H1 (cell line): ENCODE measurements at regions of chr15 and their contacts with region 1.

Region 1: DNA sequence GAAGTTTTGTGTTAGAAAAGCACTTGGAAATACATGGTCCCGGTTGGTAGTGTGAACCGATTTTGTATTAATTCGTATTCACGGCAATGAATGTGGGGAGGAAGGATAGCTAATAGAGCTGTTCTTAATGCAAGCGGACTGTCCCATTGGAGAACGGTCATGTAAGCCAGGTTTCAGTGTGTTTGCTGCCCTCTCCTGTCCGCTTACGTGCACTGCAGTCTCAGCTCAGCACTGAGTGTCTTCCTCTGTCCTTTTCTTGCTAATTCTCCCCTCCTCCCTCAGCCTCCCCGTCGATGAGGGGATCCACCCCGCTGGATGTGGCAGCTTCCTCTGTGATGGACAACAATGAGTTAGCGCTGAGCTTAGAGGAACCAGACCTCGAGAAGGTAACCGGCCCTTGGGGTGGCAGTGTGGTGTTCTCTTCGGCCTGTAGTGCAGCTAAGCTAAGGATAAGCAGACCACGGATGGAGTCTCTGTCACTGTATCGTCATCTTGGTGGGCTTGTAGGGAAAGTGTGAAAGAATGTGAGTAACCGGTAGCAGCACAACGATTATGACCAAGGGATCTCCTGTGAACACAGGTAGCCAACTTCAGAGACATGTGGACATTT is 267.5 kb upstream of the CHRM5 start:
- DNase-seq: peak; percentile 65 to 89
- H3K4me3 ChIP-seq: no peak overlapping the region
- H3K27ac ChIP-seq: no peak overlapping the region
- H3K4me1 ChIP-seq: peaks cover 0 to 4% (median 0%) of the 10 kb centered on the region in 4 experiments; a peak in 4 of 7 replicates
- H3K27me3 ChIP-seq: no peaks in the 10 kb centered on the region
- CTCF ChIP-seq: peak; percentile 86 to 100 (median 98)
- EP300 ChIP-seq: no peak
- POLR2A ChIP-seq: no peak
- RAD21 ChIP-seq: peak; percentile 94 to 98

Region 2: GRCh38 chr15:32870240-32871033 is 830.4 kb before region 1 on chr15:
- CTCF ChIA-PET with region 1: no interaction called
- POLR2A ChIA-PET with region 1: no interaction called
- DNase-seq: no peak
- H3K4me3 ChIP-seq: no peak overlapping the region
- H3K27ac ChIP-seq: no peak overlapping the region
- H3K4me1 ChIP-seq: peaks cover 0 to 5% (median 0%) of the 10 kb centered on the region in 4 experiments; a peak in 2 of 7 replicates
- H3K27me3 ChIP-seq: no peaks in the 10 kb centered on the region
- CTCF ChIP-seq: no peak
- EP300 ChIP-seq: no peak
- POLR2A ChIP-seq: no peak
- RAD21 ChIP-seq: no peak

Region 3: DNA sequence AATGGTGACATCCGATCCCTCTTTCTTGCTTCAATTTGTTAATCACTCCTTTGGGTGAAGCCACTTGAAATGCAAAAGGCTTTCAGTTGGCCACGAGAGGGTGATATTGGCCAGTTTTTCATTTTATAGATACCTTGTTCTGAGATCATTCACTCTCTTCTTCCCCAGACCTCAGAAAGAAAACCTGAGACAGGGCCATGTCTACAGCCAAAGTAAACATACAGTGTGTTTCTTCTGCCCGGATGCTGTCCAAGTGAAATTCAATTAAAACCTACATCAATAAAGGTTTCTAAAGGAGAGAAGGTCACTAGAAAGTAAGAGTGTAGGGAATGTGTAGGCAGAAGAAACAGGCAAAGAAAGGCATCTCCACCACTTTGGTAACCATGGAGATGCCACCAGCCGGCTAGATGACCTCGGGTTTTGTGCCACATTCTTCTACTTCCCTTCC is 466.8 kb before region 1 on chr15:
- CTCF ChIA-PET with region 1: interaction called, 17 read pairs
- POLR2A ChIA-PET with region 1: no interaction called
- DNase-seq: no peak
- H3K4me3 ChIP-seq: no peak overlapping the region
- H3K27ac ChIP-seq: no peak overlapping the region
- H3K4me1 ChIP-seq: peaks cover 0 to 2% (median 0%) of the 10 kb centered on the region in 4 experiments; a peak in 1 of 7 replicates
- H3K27me3 ChIP-seq: no peaks in the 10 kb centered on the region
- CTCF ChIP-seq: peak in 2 of 3 experiments; percentile 41 to 56; a peak in 2 of 4 replicates
- EP300 ChIP-seq: no peak
- POLR2A ChIP-seq: no peak
- RAD21 ChIP-seq: peak; percentile 71 to 76

Region 4: DNA sequence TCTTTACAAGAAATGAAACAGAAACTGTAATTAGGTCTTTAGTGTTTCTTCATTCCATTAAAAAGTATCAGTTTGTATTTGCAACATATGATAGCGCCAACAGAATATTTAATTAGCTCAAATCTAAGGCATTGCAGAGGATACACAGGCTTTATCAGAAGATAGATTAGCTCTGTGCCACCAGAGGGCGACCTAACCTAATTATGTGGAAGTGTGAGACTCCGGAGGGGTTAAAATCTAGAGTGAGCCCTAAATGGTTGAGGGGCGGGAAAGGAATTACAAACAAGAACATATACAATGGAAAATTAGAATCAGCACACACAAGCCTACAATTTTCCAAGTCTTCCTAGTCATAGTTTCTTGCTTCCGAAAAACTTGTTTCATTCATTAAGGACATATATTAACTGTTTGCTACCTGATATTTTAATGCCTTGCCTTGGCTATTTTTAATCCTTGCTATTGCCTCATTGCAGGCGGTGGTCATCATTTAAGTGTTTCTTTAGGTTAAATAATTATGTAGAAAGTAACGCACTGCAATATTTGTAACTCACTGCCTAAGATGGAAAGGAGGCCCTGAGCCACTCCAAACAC is 408.0 kb before region 1 on chr15:
- CTCF ChIA-PET with region 1: interaction called, 81 read pairs
- POLR2A ChIA-PET with region 1: interaction called, 3 read pairs
- DNase-seq: peak in 1 of 2 experiments; percentile 70
- H3K4me3 ChIP-seq: no peak overlapping the region
- H3K27ac ChIP-seq: no peak overlapping the region
- H3K4me1 ChIP-seq: no peaks in the 10 kb centered on the region
- H3K27me3 ChIP-seq: no peaks in the 10 kb centered on the region
- CTCF ChIP-seq: peak in 2 of 3 experiments; percentile 68 to 76; a peak in 3 of 4 replicates
- EP300 ChIP-seq: no peak
- POLR2A ChIP-seq: no peak
- RAD21 ChIP-seq: peak; percentile 93 to 95

Region 5: DNA sequence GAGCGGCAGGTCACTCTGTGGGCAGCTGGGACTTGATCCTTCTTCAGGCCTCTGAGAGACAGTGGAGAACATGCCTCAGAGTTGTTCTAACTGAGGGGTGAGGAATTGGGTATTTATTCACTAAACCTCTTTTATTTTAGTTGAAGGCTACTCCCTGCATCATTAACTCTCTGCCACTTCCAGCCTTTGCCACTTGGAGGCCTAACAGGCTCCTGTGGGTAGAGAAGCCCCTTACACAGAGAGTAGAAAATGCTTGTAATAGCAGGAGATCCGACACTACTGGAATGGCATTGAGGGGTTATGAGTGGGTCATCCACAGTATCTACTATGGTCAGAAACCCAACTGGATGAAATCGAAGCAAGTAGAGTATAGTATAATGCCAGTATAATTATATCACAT is 308.3 kb before region 1 on chr15:
- CTCF ChIA-PET with region 1: interaction called, 14 read pairs
- POLR2A ChIA-PET with region 1: no interaction called
- DNase-seq: no peak
- H3K4me3 ChIP-seq: no peak overlapping the region
- H3K27ac ChIP-seq: no peak overlapping the region
- H3K4me1 ChIP-seq: no peaks in the 10 kb centered on the region; a peak in 2 of 7 replicates
- H3K27me3 ChIP-seq: no peaks in the 10 kb centered on the region
- CTCF ChIP-seq: peak; percentile 5 to 53 (median 52)
- EP300 ChIP-seq: no peak
- POLR2A ChIP-seq: no peak
- RAD21 ChIP-seq: peak; percentile 43 to 66

Region 6: DNA sequence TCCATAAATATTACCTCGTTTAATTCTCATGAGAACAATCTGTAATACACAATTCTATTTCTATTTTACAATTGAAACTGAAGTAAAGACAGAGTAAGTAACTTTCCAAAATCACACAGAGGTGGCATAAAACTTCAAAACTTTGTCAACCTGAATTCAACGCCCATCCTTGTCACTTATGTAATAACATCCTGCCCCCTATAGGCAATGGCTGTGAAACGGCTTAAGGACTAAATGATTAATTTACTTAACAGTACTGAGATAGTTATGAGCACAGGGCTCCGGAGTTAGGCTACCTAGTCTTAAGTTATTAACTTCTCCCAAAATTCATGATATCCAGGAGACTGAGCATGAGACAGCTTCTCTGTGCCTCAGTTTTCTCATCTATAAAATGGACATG is 25.6 kb before region 1 on chr15:
- CTCF ChIA-PET with region 1: interaction called, 15 read pairs
- POLR2A ChIA-PET with region 1: no interaction called
- DNase-seq: no peak
- H3K4me3 ChIP-seq: no peak overlapping the region
- H3K27ac ChIP-seq: no peak overlapping the region
- H3K4me1 ChIP-seq: no peaks in the 10 kb centered on the region
- H3K27me3 ChIP-seq: no peaks in the 10 kb centered on the region
- CTCF ChIP-seq: peak in 2 of 3 experiments; percentile 62 to 83; a peak in 3 of 4 replicates
- EP300 ChIP-seq: no peak
- POLR2A ChIP-seq: no peak
- RAD21 ChIP-seq: peak; percentile 79 to 83

Region 7: DNA sequence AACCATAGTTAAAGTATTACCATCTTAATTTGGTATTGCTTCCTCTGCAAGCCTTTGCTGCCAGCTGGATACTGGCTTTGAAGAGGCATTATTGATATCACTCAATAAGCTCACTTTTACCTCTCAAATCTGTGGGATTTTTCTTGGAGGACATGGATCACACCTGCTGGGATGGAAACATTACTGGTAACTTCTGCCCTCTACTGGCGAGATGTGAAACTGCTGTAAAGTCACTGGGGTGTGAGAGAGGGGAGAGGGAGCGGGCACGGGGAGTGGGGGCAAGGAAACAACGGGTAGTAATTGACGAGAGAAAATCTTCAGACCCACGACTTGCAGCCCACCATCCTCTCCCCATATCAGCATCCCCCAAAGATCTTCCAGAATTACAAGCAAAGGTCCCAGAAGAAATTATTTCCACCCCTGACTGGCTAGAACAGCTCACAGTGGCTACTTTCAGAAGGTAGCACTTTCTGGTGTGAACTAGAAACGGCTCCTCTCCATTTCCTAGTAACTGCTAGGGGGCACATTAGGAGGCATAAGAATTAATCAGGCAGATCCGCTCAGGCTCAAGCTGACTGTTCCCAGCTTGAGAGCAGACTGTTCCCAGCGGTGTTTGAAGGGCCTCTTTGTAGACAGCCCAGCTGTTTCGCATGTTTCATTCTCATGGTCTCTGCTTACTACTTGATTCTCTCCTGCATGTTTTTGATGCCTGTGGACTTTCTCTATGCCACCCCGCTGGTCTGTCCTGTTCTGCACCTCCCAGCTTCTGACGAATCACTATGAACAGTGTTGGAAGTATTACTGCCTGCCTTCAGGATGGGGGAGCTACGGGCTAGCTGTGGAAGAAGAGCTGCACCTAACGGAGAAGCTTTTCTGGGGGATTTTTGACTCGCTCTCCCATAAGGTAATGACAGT is 37.1 kb after region 1 on chr15:
- CTCF ChIA-PET with region 1: interaction called, 25 read pairs
- POLR2A ChIA-PET with region 1: no interaction called
- DNase-seq: peak; percentile 15 to 79
- H3K4me3 ChIP-seq: peak overlapping the region; percentile 16 to 58 (median 30); a peak in 6 of 8 replicates
- H3K27ac ChIP-seq: no peak overlapping the region
- H3K4me1 ChIP-seq: peaks cover 0 to 6% (median 3%) of the 10 kb centered on the region in 4 experiments; a peak in 2 of 7 replicates
- H3K27me3 ChIP-seq: 0 out of 7 replicates have a peak, but pooled peaks cover 0 to 4% (median 0%) of the 10 kb centered on the region in 4 experiments
- CTCF ChIP-seq: peak; percentile 55 to 77 (median 72)
- EP300 ChIP-seq: no peak
- POLR2A ChIP-seq: no peak
- RAD21 ChIP-seq: peak; percentile 64 to 79